H1 (cell line): ENCODE measurements at regions of chr20 and their contacts with region 1.

Region 1: DNA sequence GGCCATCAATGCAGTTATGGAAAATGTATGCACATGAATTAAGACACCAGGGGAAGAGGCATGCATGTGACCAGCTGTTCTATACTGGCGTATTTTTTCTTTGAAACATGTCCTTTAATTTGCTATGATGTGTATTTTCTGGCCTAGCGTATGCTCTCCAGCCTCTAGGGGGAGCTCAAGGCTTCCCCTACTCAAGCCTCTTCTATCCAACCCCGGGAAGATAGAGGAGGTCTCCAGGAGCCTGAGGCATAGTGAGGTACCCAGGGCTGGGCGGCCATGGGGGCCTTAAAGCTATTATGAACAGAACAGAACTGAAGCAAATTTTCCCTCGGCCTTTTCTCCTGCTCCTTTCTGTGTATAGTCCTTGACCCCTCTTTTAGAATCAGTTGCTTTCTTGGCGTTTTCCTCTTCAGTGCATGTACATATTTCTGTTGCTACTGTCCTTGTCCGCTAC is 528.9 kb downstream of the MAFB start:
- DNase-seq: peak; percentile 36 to 67
- H3K4me3 ChIP-seq: no peak overlapping the region
- H3K27ac ChIP-seq: no peak overlapping the region
- H3K4me1 ChIP-seq: no peaks in the 10 kb centered on the region
- H3K27me3 ChIP-seq: peaks cover 0 to 1% (median 0%) of the 10 kb centered on the region in 4 experiments; a peak in 1 of 7 replicates
- CTCF ChIP-seq: peak; percentile 41 to 81 (median 71)
- EP300 ChIP-seq: no peak
- POLR2A ChIP-seq: no peak
- RAD21 ChIP-seq: peak; percentile 72 to 77

Region 2: DNA sequence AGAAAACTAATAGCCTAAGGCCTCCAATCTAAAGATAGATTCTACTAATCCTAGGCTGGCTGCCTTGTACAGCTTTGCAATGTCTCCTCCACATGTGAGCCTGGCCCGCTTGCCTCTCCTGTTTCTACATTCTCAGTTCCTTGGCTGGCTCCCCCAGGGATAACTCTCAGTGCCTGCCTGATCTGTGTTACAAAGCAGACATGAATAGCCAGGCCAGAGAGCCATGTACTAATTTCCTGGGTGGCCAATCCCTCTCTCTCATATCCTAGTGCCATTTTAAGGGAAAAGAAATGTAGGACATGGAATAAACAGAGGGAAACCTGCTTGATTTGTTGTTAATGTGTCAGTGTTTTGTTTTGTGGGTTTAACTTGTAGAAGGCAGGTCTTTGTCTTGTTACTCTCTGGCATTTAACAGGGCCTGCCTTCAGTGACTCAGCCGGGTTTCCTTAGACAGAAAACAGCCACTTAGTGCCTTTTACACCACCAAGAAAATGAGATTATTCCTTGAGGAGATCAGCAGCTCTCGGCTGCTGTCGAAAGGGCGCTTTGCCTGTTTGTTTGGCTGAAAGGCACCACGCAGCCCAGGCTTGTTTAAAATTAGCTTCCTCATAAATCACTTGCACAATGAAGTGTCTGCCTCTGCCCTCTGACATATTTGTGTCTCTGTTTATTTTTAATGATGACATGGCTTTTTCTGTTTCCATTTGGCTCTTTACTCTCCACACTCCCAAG is 173.8 kb before region 1 on chr20:
- CTCF ChIA-PET with region 1: no interaction called
- POLR2A ChIA-PET with region 1: no interaction called
- DNase-seq: peak; percentile 7 to 52
- H3K4me3 ChIP-seq: no peak overlapping the region
- H3K27ac ChIP-seq: no peak overlapping the region
- H3K4me1 ChIP-seq: peaks cover 1 to 10% (median 5%) of the 10 kb centered on the region in 4 experiments; a peak in 5 of 7 replicates
- H3K27me3 ChIP-seq: no peaks in the 10 kb centered on the region
- CTCF ChIP-seq: no peak
- EP300 ChIP-seq: no peak
- POLR2A ChIP-seq: no peak
- RAD21 ChIP-seq: no peak

Region 3: GRCh38 chr20:40046703-40047102 is 113.4 kb before region 1 on chr20:
- CTCF ChIA-PET with region 1: no interaction called
- POLR2A ChIA-PET with region 1: no interaction called
- DNase-seq: no peak
- H3K4me3 ChIP-seq: no peak overlapping the region
- H3K27ac ChIP-seq: no peak overlapping the region
- H3K4me1 ChIP-seq: no peaks in the 10 kb centered on the region
- H3K27me3 ChIP-seq: no peaks in the 10 kb centered on the region
- CTCF ChIP-seq: no peak
- EP300 ChIP-seq: no peak
- POLR2A ChIP-seq: no peak
- RAD21 ChIP-seq: no peak

Region 4: GRCh38 chr20:40144581-40144980 is 15.5 kb before region 1 on chr20:
- CTCF ChIA-PET with region 1: interaction called, 16 read pairs
- POLR2A ChIA-PET with region 1: no interaction called
- DNase-seq: no peak
- H3K4me3 ChIP-seq: no peak overlapping the region
- H3K27ac ChIP-seq: no peak overlapping the region
- H3K4me1 ChIP-seq: no peaks in the 10 kb centered on the region
- H3K27me3 ChIP-seq: no peaks in the 10 kb centered on the region
- CTCF ChIP-seq: no peak
- EP300 ChIP-seq: no peak
- POLR2A ChIP-seq: no peak
- RAD21 ChIP-seq: no peak

Region 5: DNA sequence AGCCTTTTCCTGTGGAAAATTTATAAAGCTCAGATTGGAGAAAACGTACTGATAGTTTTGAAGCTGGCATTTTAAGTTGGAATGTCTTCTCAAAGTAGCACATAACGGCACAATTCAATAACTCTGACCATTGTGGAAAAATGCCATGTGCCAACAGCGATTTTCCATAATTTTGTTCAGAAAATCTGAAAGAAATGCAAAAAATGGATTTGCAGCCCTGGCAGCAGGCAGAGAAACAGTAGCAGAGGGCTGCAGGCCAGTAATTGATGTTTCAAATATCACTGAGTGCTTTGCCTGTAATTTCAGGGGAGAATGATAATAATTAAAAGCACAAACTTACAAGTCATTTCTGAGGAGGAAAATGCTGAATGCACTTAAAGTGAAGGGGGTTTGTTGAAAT is 21.6 kb after region 1 on chr20:
- CTCF ChIA-PET with region 1: interaction called, 10 read pairs
- POLR2A ChIA-PET with region 1: no interaction called
- DNase-seq: no peak
- H3K4me3 ChIP-seq: no peak overlapping the region
- H3K27ac ChIP-seq: no peak overlapping the region
- H3K4me1 ChIP-seq: no peaks in the 10 kb centered on the region
- H3K27me3 ChIP-seq: no peaks in the 10 kb centered on the region
- CTCF ChIP-seq: no peak
- EP300 ChIP-seq: no peak
- POLR2A ChIP-seq: no peak
- RAD21 ChIP-seq: no peak

Region 6: DNA sequence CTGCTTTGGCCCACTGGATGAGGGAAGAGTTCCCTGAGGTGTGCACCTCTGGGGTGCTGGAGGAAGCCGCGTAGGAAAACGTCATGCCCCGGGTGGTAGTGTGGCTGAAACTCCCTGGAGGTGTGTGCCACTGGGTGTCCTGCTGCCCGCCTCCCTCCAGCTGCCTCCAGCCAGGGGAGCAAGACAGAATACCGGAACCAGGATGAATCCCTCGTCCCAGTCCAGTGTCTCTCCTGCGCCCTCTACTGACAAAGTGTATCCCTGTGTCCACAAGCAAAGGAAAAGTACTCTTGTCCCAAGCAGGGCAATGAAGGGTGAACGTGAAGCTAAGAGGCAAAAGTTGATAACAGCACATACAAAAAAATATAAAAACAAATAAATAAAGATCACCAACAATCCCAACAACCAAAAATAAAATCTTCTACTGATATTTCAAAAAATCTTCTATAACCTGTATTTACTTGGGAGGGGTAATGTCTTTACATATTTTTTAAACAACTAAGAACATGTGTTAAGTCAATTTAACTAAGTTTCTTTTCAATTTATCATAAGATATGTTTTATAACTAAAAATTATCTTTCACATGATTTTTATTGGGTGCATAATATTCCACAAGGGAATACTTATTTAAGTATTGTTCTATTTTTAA is 91.3 kb after region 1 on chr20:
- CTCF ChIA-PET with region 1: interaction called, 10 read pairs
- POLR2A ChIA-PET with region 1: no interaction called
- DNase-seq: peak in 1 of 2 experiments; percentile 76
- H3K4me3 ChIP-seq: no peak overlapping the region
- H3K27ac ChIP-seq: no peak overlapping the region
- H3K4me1 ChIP-seq: no peaks in the 10 kb centered on the region; a peak in 1 of 7 replicates
- H3K27me3 ChIP-seq: no peaks in the 10 kb centered on the region
- CTCF ChIP-seq: peak; percentile 79 to 85 (median 82)
- EP300 ChIP-seq: no peak
- POLR2A ChIP-seq: no peak
- RAD21 ChIP-seq: peak; percentile 81 to 86